Endothelial cell of umbilical vein (primary cell): ENCODE measurements at regions of chr11 and their contacts with region 1.

Region 1: DNA sequence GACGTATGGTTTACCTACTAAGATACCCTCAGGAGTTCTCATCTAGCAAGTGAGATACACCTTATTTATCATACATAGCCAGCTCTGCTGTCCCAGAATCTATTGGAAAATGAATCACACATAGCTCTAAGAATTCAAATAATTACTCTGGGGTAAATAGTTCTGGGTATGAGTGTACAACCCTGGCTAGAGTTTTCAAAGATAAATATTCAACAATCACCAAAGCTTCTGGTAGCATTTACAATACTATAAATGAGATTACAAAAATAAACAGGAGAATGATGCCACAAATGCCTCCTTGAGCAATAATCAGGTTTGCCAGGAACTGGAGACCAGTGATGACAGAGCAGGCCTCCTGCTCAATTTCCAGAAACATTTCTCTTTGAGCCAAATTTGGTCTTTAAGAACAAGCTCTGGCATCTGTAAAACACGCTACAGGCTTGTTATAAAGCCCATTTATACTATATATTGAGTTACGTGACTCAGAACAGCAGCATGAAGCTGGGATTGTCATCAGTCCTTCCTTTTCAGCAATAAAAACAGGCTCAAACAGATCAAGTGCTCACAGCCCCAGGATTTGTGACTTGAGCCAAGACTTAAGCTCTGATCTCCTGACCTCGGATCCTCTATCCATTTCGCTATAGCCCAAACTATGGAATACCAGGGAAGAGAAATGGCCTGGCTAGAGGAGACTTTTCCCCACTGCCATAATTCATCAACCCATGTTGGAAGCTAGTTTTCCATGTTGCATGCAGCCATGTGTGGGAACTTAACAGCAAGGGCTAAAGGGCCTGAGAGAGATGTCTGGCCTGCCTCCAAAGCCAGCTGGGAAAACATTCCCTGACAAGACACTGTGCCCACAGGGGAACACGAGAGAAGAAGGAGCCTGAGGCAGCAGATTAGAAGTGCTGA is 19.7 kb downstream of the RAB30 start:
- DNase-seq: peak; percentile 94
- H3K4me3 ChIP-seq: no peak overlapping the region
- H3K27ac ChIP-seq: peak overlapping the region; percentile 88
- H3K4me1 ChIP-seq: peaks cover 59% of the 10 kb centered on the region
- H3K27me3 ChIP-seq: no peaks in the 10 kb centered on the region
- CTCF ChIP-seq: no peak
- POLR2A ChIP-seq: no peak

Region 2: DNA sequence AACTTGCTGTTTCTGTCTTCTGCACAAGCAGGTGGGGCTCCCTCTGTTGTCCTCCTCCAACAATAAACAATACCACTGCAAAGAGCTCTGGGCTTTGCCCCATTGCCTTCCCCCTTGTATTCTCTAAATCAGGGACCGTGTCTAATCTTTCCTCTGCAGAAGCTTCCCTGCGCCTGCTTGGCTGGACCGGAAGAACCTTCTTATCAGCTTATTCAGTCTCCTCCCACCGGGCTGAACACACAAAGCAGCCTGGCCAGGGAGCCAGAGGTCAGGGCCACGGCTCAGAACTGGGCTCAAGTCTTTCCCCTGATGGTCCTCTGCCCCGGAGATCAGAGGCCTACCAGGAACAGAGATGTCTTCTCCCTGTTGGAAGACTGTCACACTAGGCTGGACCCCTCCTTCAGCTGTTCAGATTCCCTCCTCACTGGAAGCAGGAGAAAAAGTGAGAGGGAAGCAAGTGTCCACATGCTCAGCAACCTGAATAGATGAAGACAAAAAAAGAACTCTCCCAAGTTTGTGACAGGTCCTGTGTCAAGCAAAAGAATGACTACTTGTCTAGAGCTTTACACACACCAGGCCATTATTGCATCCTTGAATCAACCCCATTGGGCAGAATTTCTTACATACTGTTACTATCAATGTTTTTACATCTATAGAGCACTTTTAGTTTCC is 44.0 kb before region 1 on chr11:
- CTCF ChIA-PET with region 1: interaction called, 3 read pairs
- POLR2A ChIA-PET with region 1: no interaction called
- dilution Hi-C with region 1: no loop called
- intact Hi-C with region 1: loop called (anchors 5 kb)
- DNase-seq: peak; percentile 94
- H3K4me3 ChIP-seq: no peak overlapping the region
- H3K27ac ChIP-seq: peak overlapping the region; percentile 68
- H3K4me1 ChIP-seq: peaks cover 40% of the 10 kb centered on the region
- H3K27me3 ChIP-seq: no peaks in the 10 kb centered on the region
- CTCF ChIP-seq: peak in 1 of 2 donors; percentile 6
- POLR2A ChIP-seq: peak; percentile 51

Region 3: DNA sequence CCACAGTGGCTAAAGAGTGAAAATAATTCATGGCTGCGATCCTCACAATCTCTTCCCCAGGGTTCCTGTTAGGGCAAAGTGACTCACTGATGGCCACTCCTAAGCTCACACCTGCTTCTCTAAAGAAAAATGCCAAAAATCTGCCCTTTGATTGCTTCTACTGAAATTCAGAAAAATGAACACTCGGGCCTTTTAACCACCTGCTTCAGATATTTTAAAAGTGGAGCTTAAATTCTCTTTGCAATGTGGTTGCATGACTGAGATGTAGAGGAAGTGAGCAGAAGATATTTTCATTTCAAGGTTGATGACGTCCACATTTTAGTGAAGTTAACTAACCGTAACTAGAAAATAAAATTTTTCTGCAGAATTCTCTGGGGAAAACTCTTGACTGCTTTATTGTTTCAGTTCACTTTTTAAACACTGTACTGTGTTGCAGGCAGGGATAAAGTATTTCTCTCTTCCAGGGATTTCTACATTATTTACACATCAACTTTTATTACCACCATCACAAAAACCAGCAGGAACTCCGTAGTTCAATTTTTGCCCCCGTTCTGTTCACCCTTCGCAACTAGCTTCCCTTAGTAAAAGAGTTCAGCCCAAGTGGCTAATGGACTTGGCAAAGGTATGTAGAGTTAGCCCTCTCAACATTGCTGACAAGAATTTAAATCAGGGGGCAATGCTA is 11.2 kb after region 1 on chr11:
- CTCF ChIA-PET with region 1: interaction called, 11 read pairs
- POLR2A ChIA-PET with region 1: no interaction called
- dilution Hi-C with region 1: no loop called
- intact Hi-C with region 1: no loop called
- DNase-seq: no peak
- H3K4me3 ChIP-seq: no peak overlapping the region
- H3K27ac ChIP-seq: no peak overlapping the region
- H3K4me1 ChIP-seq: peaks cover 3% of the 10 kb centered on the region
- H3K27me3 ChIP-seq: no peaks in the 10 kb centered on the region
- CTCF ChIP-seq: no peak
- POLR2A ChIP-seq: no peak